T-cell (primary cell): ENCODE measurements at regions of chr10 and their contacts with region 1.

Region 1: DNA sequence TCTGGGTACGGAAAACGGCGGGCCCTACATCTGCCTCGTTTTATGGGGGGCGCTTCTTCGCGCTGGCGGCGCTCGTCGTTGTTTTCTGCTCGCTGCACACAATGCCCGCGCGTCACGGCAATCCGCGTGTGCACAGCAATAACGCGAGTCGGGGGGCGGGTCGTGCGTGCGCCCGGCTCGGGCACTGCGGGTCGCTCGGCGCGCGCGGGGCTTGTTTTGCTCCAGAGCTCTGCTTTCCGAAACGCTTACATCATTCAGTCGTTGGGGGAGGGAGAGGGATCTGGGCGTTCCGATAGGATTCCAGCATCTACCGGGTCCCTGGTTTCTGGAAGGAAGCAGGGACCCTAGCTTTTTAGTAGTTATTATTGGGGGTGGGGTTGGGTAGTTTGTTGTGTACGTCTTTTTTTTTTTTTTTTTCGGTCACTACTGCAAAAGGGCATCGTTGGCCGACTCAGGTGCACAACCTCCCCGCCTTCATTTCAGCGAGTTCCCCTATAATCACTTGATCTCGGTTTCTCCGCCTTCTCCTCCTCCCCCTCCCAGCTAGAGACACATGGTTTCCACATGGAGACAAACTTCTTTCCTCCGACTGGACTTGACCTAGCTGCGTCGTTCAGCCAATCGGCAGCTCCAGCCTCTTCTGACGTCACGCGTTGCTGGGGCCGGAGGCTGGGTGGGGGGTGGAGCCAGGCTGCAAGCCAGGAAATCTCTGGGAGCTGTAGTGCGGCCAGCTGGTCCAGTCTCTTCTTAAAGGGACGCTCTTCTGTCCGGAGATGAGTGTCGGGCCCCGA is 3.5 kb downstream of the MXI1 start:
- DNase-seq: peak; percentile 79 to 94 (median 86)
- ATAC-seq: peak; percentile 56 to 65 (median 58)
- H3K4me3 ChIP-seq: peak overlapping the region; percentile 89 to 91
- H3K4me3 Mint-ChIP-seq: peak overlapping the region; percentile 89 to 96 (median 91)
- H3K27ac ChIP-seq: peak overlapping the region; percentile 93
- H3K27ac Mint-ChIP-seq: peak overlapping the region; percentile 96 to 98
- H3K4me1 ChIP-seq: peaks cover 27 to 71% of the 10 kb centered on the region in 2 experiments
- H3K4me1 Mint-ChIP-seq: peaks cover 52 to 65% (median 60%) of the 10 kb centered on the region in 3 donors
- H3K27me3 ChIP-seq: peaks cover 0 to 14% of the 10 kb centered on the region in 2 experiments
- H3K27me3 Mint-ChIP-seq: no peaks in the 10 kb centered on the region

Region 2: DNA sequence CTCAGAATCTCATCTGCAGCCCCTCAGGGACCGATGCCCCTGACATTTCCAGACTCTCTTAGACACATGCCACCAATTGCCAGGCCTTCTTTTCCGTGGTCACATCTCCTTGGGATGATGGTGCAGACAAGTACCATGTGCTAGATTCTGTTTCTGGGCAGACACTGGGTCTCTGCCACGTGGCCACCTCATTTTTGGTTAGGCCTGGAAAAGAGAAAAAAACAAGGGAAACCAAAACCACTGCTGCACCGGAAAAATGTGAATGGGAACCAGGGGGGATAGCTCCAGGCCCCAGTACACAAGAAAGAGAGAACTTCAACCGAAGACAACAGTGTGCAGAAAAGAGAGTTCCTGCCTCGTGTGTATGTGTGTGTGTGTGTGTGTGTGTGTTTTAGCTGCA is 26.5 kb before region 1 on chr10:
- CTCF ChIA-PET with region 1: interaction called, 4 to 11 read pairs
- POLR2A ChIA-PET with region 1: interaction called, 5 to 6 read pairs
- DNase-seq: no peak
- ATAC-seq: no peak
- H3K4me3 ChIP-seq: no peak overlapping the region
- H3K4me3 Mint-ChIP-seq: no peak overlapping the region
- H3K27ac ChIP-seq: no peak overlapping the region
- H3K27ac Mint-ChIP-seq: no peak overlapping the region
- H3K4me1 ChIP-seq: no peaks in the 10 kb centered on the region
- H3K4me1 Mint-ChIP-seq: no peaks in the 10 kb centered on the region
- H3K27me3 ChIP-seq: peaks cover 0 to 8% of the 10 kb centered on the region in 2 experiments
- H3K27me3 Mint-ChIP-seq: peaks cover 3% of the 10 kb centered on the region in 2 donors

Region 3: GRCh38 chr10:110225756-110226542 is 15.1 kb after region 1 on chr10:
- CTCF ChIA-PET with region 1: interaction called, 5 to 94 read pairs
- POLR2A ChIA-PET with region 1: interaction called, 8 to 21 read pairs
- DNase-seq: peak; percentile 78 to 95 (median 86)
- ATAC-seq: peak; percentile 71 to 83 (median 81)
- H3K4me3 ChIP-seq: peak overlapping the region; percentile 62 to 87
- H3K4me3 Mint-ChIP-seq: peak overlapping the region; percentile 92 to 94 (median 93)
- H3K27ac ChIP-seq: peak overlapping the region; percentile 65
- H3K27ac Mint-ChIP-seq: peak overlapping the region; percentile 92 to 95
- H3K4me1 ChIP-seq: peaks cover 12 to 24% of the 10 kb centered on the region in 2 experiments
- H3K4me1 Mint-ChIP-seq: peaks cover 40 to 53% (median 46%) of the 10 kb centered on the region in 3 donors
- H3K27me3 ChIP-seq: no peaks in the 10 kb centered on the region
- H3K27me3 Mint-ChIP-seq: no peaks in the 10 kb centered on the region

Region 4: GRCh38 chr10:110241407-110241806 is 30.5 kb after region 1 on chr10:
- CTCF ChIA-PET with region 1: interaction called in 1 of 2 experiments, 5 read pairs
- POLR2A ChIA-PET with region 1: interaction called in 1 of 2 experiments, 12 read pairs
- DNase-seq: no peak
- ATAC-seq: no peak
- H3K4me3 ChIP-seq: no peak overlapping the region
- H3K4me3 Mint-ChIP-seq: peak overlapping the region in 2 of 3 donors; percentile 31 to 53
- H3K27ac ChIP-seq: peak overlapping the region; percentile 5
- H3K27ac Mint-ChIP-seq: peak overlapping the region in 1 of 2 donors; percentile 10
- H3K4me1 ChIP-seq: no peaks in the 10 kb centered on the region
- H3K4me1 Mint-ChIP-seq: peaks cover 46 to 52% (median 50%) of the 10 kb centered on the region in 3 donors
- H3K27me3 ChIP-seq: no peaks in the 10 kb centered on the region
- H3K27me3 Mint-ChIP-seq: no peaks in the 10 kb centered on the region

Region 5: GRCh38 chr10:110269374-110270318 is 58.8 kb after region 1 on chr10:
- CTCF ChIA-PET with region 1: interaction called in 1 of 2 experiments, 13 read pairs
- POLR2A ChIA-PET with region 1: interaction called, 5 to 8 read pairs
- DNase-seq: peak in 16 of 35 experiments; percentile 1 to 38 (median 10)
- ATAC-seq: peak in 2 of 4 experiments; percentile 33 to 78
- H3K4me3 ChIP-seq: peak overlapping the region in 1 of 2 donors; percentile 18
- H3K4me3 Mint-ChIP-seq: peak overlapping the region; percentile 64 to 74 (median 69)
- H3K27ac ChIP-seq: peak overlapping the region; percentile 18
- H3K27ac Mint-ChIP-seq: peak overlapping the region; percentile 85
- H3K4me1 ChIP-seq: peaks cover 3 to 6% of the 10 kb centered on the region in 2 experiments
- H3K4me1 Mint-ChIP-seq: peaks cover 60 to 69% (median 64%) of the 10 kb centered on the region in 3 donors
- H3K27me3 ChIP-seq: no peaks in the 10 kb centered on the region
- H3K27me3 Mint-ChIP-seq: no peaks in the 10 kb centered on the region

Region 6: GRCh38 chr10:110279407-110279986 is 68.6 kb after region 1 on chr10:
- CTCF ChIA-PET with region 1: interaction called, 9 to 23 read pairs
- POLR2A ChIA-PET with region 1: no interaction called
- DNase-seq: peak in 33 of 35 experiments; percentile 3 to 78 (median 31)
- ATAC-seq: peak in 2 of 4 experiments; percentile 36 to 82
- H3K4me3 ChIP-seq: no peak overlapping the region
- H3K4me3 Mint-ChIP-seq: peak overlapping the region in 1 of 3 donors; percentile 23
- H3K27ac ChIP-seq: no peak overlapping the region
- H3K27ac Mint-ChIP-seq: no peak overlapping the region
- H3K4me1 ChIP-seq: peaks cover 1 to 3% of the 10 kb centered on the region in 2 experiments
- H3K4me1 Mint-ChIP-seq: peaks cover 21 to 43% (median 32%) of the 10 kb centered on the region in 3 donors
- H3K27me3 ChIP-seq: no peaks in the 10 kb centered on the region
- H3K27me3 Mint-ChIP-seq: no peaks in the 10 kb centered on the region

Region 7: GRCh38 chr10:110336111-110336721 is 125.3 kb after region 1 on chr10:
- CTCF ChIA-PET with region 1: no interaction called
- POLR2A ChIA-PET with region 1: interaction called in 1 of 2 experiments, 10 read pairs
- DNase-seq: no peak
- ATAC-seq: no peak
- H3K4me3 ChIP-seq: no peak overlapping the region
- H3K4me3 Mint-ChIP-seq: no peak overlapping the region
- H3K27ac ChIP-seq: no peak overlapping the region
- H3K27ac Mint-ChIP-seq: no peak overlapping the region
- H3K4me1 ChIP-seq: peaks cover 0 to 5% of the 10 kb centered on the region in 2 experiments
- H3K4me1 Mint-ChIP-seq: peaks cover 5 to 12% (median 11%) of the 10 kb centered on the region in 3 donors
- H3K27me3 ChIP-seq: peaks cover 0 to 3% of the 10 kb centered on the region in 2 experiments
- H3K27me3 Mint-ChIP-seq: no peaks in the 10 kb centered on the region